MCF 10A (cell line): ENCODE measurements at regions of chr4 and their contacts with region 1.

Region 1: GRCh38 chr4:22473268-22473667 is 42.6 kb downstream of the ADGRA3 start:
- DNase-seq: peak; percentile 88
- H3K4me3 Mint-ChIP-seq: no peak overlapping the region
- H3K27ac Mint-ChIP-seq: no peak overlapping the region
- H3K4me1 Mint-ChIP-seq: peaks cover 37% of the 10 kb centered on the region
- H3K27me3 Mint-ChIP-seq: no peaks in the 10 kb centered on the region
- CTCF ChIP-seq: no peak

Region 2: DNA sequence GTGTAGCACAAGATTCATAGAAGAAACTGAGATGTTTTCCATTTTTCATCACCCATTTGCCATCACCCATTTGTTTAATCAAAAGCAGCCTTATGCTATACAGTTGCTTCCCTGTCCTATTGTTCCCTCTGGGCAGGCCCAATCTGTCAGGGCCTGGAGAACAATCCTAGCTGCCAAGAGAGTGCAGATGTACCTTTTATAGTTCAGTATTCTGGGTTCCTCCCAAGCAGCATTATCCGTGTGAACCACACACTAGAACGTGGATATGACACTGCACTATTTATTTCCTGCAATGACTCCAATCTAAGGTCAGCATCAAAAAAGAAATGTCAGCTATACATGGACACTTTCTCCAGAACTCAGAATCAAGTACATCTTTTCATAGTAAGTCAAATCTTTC is 226.4 kb before region 1 on chr4:
- CTCF ChIA-PET with region 1: no interaction called
- POLR2A ChIA-PET with region 1: no interaction called
- intact Hi-C with region 1: no loop called
- DNase-seq: no peak
- H3K4me3 Mint-ChIP-seq: no peak overlapping the region
- H3K27ac Mint-ChIP-seq: no peak overlapping the region
- H3K4me1 Mint-ChIP-seq: no peaks in the 10 kb centered on the region
- H3K27me3 Mint-ChIP-seq: no peaks in the 10 kb centered on the region
- CTCF ChIP-seq: no peak

Region 3: GRCh38 chr4:22483551-22483981 is 10.3 kb after region 1 on chr4:
- CTCF ChIA-PET with region 1: interaction called, 6 read pairs
- POLR2A ChIA-PET with region 1: interaction called, 47 read pairs
- intact Hi-C with region 1: no loop called
- DNase-seq: peak; percentile 87
- H3K4me3 Mint-ChIP-seq: peak overlapping the region; percentile 36
- H3K27ac Mint-ChIP-seq: peak overlapping the region; percentile 90
- H3K4me1 Mint-ChIP-seq: peaks cover 48% of the 10 kb centered on the region
- H3K27me3 Mint-ChIP-seq: no peaks in the 10 kb centered on the region
- CTCF ChIP-seq: no peak

Region 4: GRCh38 chr4:22500831-22501719 is 27.8 kb after region 1 on chr4:
- CTCF ChIA-PET with region 1: interaction called, 5 read pairs
- POLR2A ChIA-PET with region 1: interaction called, 50 read pairs
- intact Hi-C with region 1: no loop called
- DNase-seq: peak; percentile 87
- H3K4me3 Mint-ChIP-seq: peak overlapping the region; percentile 24
- H3K27ac Mint-ChIP-seq: no peak overlapping the region
- H3K4me1 Mint-ChIP-seq: peaks cover 24% of the 10 kb centered on the region
- H3K27me3 Mint-ChIP-seq: no peaks in the 10 kb centered on the region
- CTCF ChIP-seq: no peak

Region 5: GRCh38 chr4:22508379-22508778 is 35.1 kb after region 1 on chr4:
- CTCF ChIA-PET with region 1: interaction called, 6 read pairs
- POLR2A ChIA-PET with region 1: interaction called, 68 read pairs
- intact Hi-C with region 1: no loop called
- DNase-seq: peak; percentile 7
- H3K4me3 Mint-ChIP-seq: no peak overlapping the region
- H3K27ac Mint-ChIP-seq: no peak overlapping the region
- H3K4me1 Mint-ChIP-seq: peaks cover 46% of the 10 kb centered on the region
- H3K27me3 Mint-ChIP-seq: no peaks in the 10 kb centered on the region
- CTCF ChIP-seq: no peak